Psoas muscle (tissue), 8 donors: ENCODE measurements at regions of chr12 and their contacts with region 1.

Region 1: DNA sequence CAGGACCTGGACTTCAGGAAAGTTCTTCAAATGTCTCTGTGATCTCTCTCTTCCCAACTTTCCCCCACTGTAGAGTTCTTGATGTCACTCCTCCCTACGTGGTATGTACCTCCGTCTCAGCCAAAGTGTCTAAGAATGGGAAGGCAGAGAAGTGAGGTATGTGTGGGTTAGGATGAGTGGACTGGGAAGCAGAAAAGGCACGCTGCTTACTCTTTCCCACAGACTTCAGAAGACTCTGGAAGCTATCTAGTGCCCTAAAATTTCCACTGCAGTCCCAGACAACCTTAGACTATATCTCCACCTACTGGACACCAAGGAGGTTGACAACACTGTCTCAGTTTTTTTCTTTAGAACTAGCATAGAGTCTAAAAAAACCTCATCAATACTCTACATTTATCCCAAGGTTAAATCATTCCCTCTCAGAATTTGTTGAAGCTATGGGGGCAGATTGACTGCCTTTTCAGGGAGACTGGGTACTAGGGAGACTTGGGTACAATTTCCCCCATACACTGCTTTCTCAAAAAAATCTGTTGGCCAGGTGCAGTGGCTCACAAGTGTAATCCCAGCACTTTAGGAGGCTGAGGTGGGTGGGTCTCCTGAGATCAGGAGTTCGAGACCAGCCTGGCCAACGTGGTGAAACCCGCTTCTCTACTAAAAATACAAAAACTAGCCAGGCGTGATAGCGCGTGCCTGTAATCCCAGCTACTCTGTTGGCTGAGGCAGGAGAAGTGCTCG is 20.6 kb upstream of the ITGA5 start:
- DNase-seq: no peak
- ATAC-seq: peak; percentile 87 to 94 (median 91)
- H3K4me3 ChIP-seq: no peak overlapping the region
- H3K27ac ChIP-seq: no peak overlapping the region
- H3K4me1 ChIP-seq: peaks cover 19% of the 10 kb centered on the region
- H3K27me3 ChIP-seq: no peaks in the 10 kb centered on the region
- CTCF ChIP-seq: peak; percentile 88

Region 2: GRCh38 chr12:54398995-54399793 is 40.5 kb before region 1 on chr12:
- intact Hi-C with region 1: loop called (anchors 1 to 2 kb)
- DNase-seq: peak; percentile 88 to 93
- ATAC-seq: peak; percentile 84 to 91 (median 88)
- H3K4me3 ChIP-seq: no peak overlapping the region
- H3K27ac ChIP-seq: no peak overlapping the region
- H3K4me1 ChIP-seq: no peaks in the 10 kb centered on the region
- H3K27me3 ChIP-seq: no peaks in the 10 kb centered on the region
- CTCF ChIP-seq: peak; percentile 99